ENCODE measurements at regions of chr11 and their contacts with region 1.

Region 1: GRCh38 chr11:85752890-85753581 is 57.9 kb downstream of the SYTL2 start:
- DNase-seq: peak; percentile 73 to 99 (median 87)
- ATAC-seq: peak; percentile 80
- H3K4me3 ChIP-seq: peak overlapping the region in 1 of 2 experiments; percentile 9
- H3K4me3 Mint-ChIP-seq: peak overlapping the region; percentile 74
- H3K27ac ChIP-seq: peak overlapping the region; percentile 47 to 83
- H3K27ac Mint-ChIP-seq: peak overlapping the region; percentile 95
- H3K4me1 ChIP-seq: peaks cover 84% of the 10 kb centered on the region
- H3K4me1 Mint-ChIP-seq: peaks cover 93% of the 10 kb centered on the region
- H3K27me3 ChIP-seq: no peaks in the 10 kb centered on the region
- H3K27me3 Mint-ChIP-seq: no peaks in the 10 kb centered on the region
- CTCF ChIP-seq: no peak

Region 2: GRCh38 chr11:85664615-85665481 is 88.2 kb before region 1 on chr11 and contains the start of gene CREBZF:
- CTCF ChIA-PET with region 1: interaction called, 3 read pairs
- POLR2A ChIA-PET with region 1: interaction called, 10 read pairs
- intact Hi-C with region 1: loop called (anchors 2 kb)
- DNase-seq: peak; percentile 84 to 96 (median 94)
- ATAC-seq: peak; percentile 61
- H3K4me3 ChIP-seq: peak within 1 kb of the TSS; percentile 78 to 94
- H3K4me3 Mint-ChIP-seq: peak within 1 kb of the TSS; percentile 100
- H3K27ac ChIP-seq: peak within 1 kb of the TSS; percentile 96 to 97
- H3K27ac Mint-ChIP-seq: peak within 1 kb of the TSS; percentile 100
- H3K4me1 ChIP-seq: peaks cover 38% of the 10 kb centered on the region
- H3K4me1 Mint-ChIP-seq: peaks cover 43% of the 10 kb centered on the region
- H3K27me3 ChIP-seq: no peaks in the 10 kb centered on the region
- H3K27me3 Mint-ChIP-seq: no peaks in the 10 kb centered on the region
- CTCF ChIP-seq: no peak
- total RNA-seq, gene CREBZF: 32.2 to 33.3 TPM

Region 3: DNA sequence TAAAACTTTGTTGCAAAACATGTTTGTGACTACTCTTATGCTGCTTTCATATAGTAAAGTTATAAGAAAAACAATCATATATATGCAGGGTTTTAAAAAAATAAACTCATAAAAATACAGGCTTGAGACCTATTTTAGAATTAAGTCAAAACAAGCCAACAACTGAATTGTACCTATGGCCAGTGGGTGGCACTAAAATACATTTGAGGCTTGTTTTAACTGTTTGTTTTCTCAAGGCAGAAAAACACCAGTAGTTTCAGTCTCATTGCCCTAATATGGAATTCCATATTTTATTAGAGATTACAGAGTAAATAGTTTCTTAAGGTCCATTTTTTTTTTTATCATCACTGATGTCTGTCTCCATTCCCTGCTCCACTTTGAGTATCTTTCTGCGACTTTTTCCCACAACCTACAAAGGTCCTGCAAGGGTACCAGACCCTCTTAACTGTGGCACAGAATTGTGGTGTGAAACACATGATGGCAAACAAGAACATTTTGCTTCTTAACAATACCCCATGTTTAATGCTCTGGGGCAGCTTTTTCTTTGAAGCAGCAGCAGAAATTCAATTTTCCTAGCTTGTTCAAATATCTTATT is 58.6 kb before region 1 on chr11:
- CTCF ChIA-PET with region 1: interaction called, 5 read pairs
- POLR2A ChIA-PET with region 1: no interaction called
- intact Hi-C with region 1: loop called (anchors 2 to 5 kb)
- DNase-seq: peak in 3 of 9 experiments; percentile 15 to 71 (median 59)
- ATAC-seq: peak; percentile 55
- H3K4me3 ChIP-seq: no peak overlapping the region
- H3K4me3 Mint-ChIP-seq: no peak overlapping the region
- H3K27ac ChIP-seq: no peak overlapping the region
- H3K27ac Mint-ChIP-seq: no peak overlapping the region
- H3K4me1 ChIP-seq: peaks cover 2% of the 10 kb centered on the region
- H3K4me1 Mint-ChIP-seq: peaks cover 7% of the 10 kb centered on the region
- H3K27me3 ChIP-seq: no peaks in the 10 kb centered on the region
- H3K27me3 Mint-ChIP-seq: no peaks in the 10 kb centered on the region
- CTCF ChIP-seq: peak; percentile 88

Region 4: DNA sequence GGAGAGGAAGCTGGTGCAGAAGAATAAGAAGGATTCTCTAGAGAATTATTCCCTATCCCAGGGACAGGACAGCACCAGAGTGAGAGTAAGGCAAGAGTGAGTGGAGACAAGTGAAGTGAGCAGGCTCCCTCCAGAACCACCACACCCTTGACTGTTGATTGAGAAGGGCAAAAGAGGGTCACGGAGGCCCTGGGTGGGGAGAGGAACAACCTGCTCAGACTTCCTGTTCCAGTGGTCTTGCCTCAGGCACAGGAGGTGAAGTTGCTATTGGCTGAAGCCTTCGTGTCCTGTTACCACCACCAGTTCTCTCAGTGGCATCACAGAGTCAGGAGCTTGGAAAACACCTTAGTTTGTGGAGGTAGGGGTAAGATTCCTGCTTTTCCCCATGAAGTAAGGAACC is 15.3 kb before region 1 on chr11:
- CTCF ChIA-PET with region 1: no interaction called
- POLR2A ChIA-PET with region 1: interaction called, 3 read pairs
- intact Hi-C with region 1: loop called in 1 of 2 experiments (anchors 1 kb)
- DNase-seq: peak in 6 of 9 experiments; percentile 16 to 62 (median 33)
- ATAC-seq: peak; percentile 52
- H3K4me3 ChIP-seq: no peak overlapping the region
- H3K4me3 Mint-ChIP-seq: peak overlapping the region; percentile 11
- H3K27ac ChIP-seq: peak overlapping the region in 1 of 2 experiments; percentile 52
- H3K27ac Mint-ChIP-seq: peak overlapping the region; percentile 76
- H3K4me1 ChIP-seq: peaks cover 26% of the 10 kb centered on the region
- H3K4me1 Mint-ChIP-seq: peaks cover 49% of the 10 kb centered on the region
- H3K27me3 ChIP-seq: no peaks in the 10 kb centered on the region
- H3K27me3 Mint-ChIP-seq: no peaks in the 10 kb centered on the region
- CTCF ChIP-seq: no peak

Region 5: DNA sequence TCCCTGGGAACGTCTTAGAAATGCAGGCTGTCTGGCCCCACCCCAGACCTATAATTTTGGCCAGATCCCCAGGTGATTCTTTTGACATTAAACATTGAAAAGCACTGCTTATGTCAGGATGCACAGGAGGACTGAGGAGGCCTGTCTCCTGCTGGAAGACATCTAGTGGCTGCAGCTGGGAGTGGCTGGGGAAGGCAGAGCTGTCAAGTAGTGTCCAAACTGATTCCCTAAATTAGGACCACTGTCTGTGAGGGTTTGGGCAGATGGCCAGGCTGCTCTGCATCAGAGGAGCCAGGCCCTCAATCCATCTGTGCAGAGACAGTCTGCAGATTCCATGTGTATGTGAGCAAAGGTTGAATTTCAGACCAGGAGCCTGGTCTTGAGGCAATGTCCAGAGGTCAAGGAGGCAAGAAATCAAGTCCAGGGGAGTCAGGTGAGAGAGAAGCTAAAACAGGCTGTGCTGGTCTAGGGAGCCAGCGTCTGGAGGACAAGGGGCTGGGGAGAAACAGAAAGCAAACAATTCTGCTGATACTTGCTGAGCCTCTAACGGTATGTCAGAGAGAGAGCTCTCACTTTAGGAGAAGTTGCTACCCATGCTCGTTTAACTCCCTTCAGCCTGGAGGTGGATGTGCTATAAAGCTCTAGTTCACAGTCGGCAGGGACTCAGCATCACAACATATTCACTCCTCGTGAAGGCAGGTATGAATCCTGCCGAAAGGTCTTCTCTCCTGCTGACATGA is 73.2 kb after region 1 on chr11:
- CTCF ChIA-PET with region 1: interaction called, 6 read pairs
- POLR2A ChIA-PET with region 1: interaction called, 6 read pairs
- intact Hi-C with region 1: loop called (anchors 1 kb)
- DNase-seq: peak in 4 of 9 experiments; percentile 17 to 46 (median 30)
- ATAC-seq: no peak
- H3K4me3 ChIP-seq: no peak overlapping the region
- H3K4me3 Mint-ChIP-seq: peak overlapping the region; percentile 12
- H3K27ac ChIP-seq: no peak overlapping the region
- H3K27ac Mint-ChIP-seq: peak overlapping the region; percentile 92
- H3K4me1 ChIP-seq: peaks cover 63% of the 10 kb centered on the region
- H3K4me1 Mint-ChIP-seq: peaks cover 66% of the 10 kb centered on the region
- H3K27me3 ChIP-seq: no peaks in the 10 kb centered on the region
- H3K27me3 Mint-ChIP-seq: no peaks in the 10 kb centered on the region
- CTCF ChIP-seq: peak; percentile 17

Measured in CD8-positive, alpha-beta T cell (primary cell).